CD8-positive, alpha-beta T cell (primary cell): ENCODE measurements at regions of chr1 and their contacts with region 1.

Region 1: DNA sequence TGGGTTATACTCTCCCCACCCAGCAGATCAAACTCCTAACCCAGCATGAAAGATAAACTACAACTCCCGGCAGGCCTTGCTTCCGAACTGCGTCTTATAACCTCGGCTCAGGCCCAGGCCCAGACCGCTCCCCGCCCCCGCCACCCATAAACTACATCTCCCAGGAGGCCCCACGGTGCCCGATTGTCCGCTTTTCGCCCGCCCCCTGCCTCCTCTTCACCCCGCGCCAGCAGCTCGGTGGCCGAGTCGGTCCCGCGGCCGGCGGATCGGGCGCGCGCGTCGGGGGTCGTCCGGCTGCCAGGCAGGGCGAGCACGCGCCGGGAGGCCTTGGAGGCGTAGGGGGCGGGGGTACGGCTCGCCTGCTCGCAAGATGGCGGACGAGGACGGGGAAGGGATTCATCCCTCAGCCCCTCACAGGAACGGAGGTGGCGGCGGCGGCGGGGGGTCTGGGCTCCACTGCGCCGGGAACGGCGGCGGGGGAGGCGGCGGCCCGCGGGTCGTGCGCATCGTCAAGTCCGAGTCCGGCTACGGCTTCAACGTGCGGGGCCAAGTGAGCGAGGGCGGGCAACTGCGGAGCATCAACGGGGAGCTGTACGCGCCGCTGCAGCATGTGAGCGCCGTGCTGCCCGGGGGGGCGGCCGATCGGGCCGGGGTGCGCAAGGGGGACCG is at the start of gene SNX27:
- DNase-seq: peak; percentile 74 to 95 (median 87)
- ATAC-seq: peak; percentile 89
- H3K4me3 ChIP-seq: peak within 1 kb of the TSS; percentile 64 to 93
- H3K4me3 Mint-ChIP-seq: peak within 1 kb of the TSS; percentile 99
- H3K27ac ChIP-seq: peak within 1 kb of the TSS; percentile 54 to 59
- H3K27ac Mint-ChIP-seq: peak within 1 kb of the TSS; percentile 95
- H3K4me1 ChIP-seq: peaks cover 16% of the 10 kb centered on the region
- H3K4me1 Mint-ChIP-seq: peaks cover 38% of the 10 kb centered on the region
- H3K27me3 ChIP-seq: no peaks in the 10 kb centered on the region
- H3K27me3 Mint-ChIP-seq: peaks cover 4% of the 10 kb centered on the region
- CTCF ChIP-seq: no peak
- total RNA-seq, gene SNX27: 9.8 to 12.2 TPM

Region 2: DNA sequence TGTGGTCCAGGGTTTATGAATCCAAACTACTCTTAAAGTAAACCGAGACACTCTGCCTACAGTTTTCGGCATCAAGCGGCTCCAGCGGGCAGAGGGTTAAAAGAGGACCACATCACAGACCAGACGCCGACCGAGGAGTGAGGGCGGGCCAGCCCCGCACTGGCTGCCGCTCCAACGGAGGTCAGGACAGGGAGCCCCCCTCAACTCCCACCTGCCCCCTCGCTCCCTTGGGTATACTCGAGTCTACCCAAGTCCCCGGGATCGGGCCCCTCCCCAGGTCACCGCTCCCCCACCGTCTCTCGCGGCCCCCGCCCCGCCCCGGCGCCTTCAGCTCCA is 735.9 kb before region 1 on chr1:
- CTCF ChIA-PET with region 1: no interaction called
- POLR2A ChIA-PET with region 1: no interaction called
- intact Hi-C with region 1: loop called in 1 of 2 experiments (anchors 5 kb)
- DNase-seq: peak in 1 of 9 experiments; percentile 42
- ATAC-seq: peak; percentile 42
- H3K4me3 ChIP-seq: peak overlapping the region; percentile 86 to 97
- H3K4me3 Mint-ChIP-seq: peak overlapping the region; percentile 89
- H3K27ac ChIP-seq: peak overlapping the region; percentile 61 to 76
- H3K27ac Mint-ChIP-seq: peak overlapping the region; percentile 93
- H3K4me1 ChIP-seq: peaks cover 20% of the 10 kb centered on the region
- H3K4me1 Mint-ChIP-seq: peaks cover 29% of the 10 kb centered on the region
- H3K27me3 ChIP-seq: no peaks in the 10 kb centered on the region
- H3K27me3 Mint-ChIP-seq: no peaks in the 10 kb centered on the region
- CTCF ChIP-seq: no peak

Region 3: DNA sequence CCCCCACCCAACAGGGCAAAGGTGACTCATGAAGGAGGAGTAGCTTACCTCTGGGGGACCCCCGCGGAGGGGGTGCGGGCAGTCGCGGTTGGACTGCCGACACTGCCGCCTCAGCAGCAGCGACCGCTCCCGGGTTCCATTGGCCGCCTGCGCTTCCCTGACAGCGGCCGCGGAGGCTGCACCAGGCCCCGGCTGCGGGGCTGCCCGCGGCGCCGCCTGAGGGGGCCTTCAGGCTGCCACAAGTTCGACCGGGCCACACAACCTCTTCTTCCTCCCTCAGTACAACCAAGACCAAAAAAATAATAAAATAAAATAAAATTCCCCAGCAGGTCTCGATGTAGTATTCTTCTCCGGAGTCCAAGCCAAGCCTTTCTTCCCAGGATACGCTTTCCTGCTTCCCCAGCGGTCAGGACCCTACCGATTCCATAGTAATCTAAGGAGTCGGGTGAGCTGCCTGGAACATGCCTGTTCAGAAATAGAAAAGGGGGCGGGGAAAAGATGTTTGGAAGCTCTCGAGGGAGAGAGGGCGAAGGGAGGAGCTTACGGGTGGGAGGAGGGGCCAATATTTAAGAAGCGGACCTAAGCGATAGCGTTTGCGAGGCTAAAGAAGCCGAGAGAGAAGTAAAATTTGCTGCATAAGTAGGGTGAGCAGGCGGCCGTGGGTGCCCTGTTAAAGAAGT is 284.6 kb before region 1 on chr1 and contains the start of gene PI4KB:
- CTCF ChIA-PET with region 1: no interaction called
- POLR2A ChIA-PET with region 1: no interaction called
- intact Hi-C with region 1: loop called in 1 of 2 experiments (anchors 5 kb)
- DNase-seq: peak; percentile 76 to 98 (median 87)
- ATAC-seq: peak; percentile 93
- H3K4me3 ChIP-seq: peak within 1 kb of the TSS; percentile 67 to 86
- H3K4me3 Mint-ChIP-seq: peak within 1 kb of the TSS; percentile 88
- H3K27ac ChIP-seq: peak within 1 kb of the TSS; percentile 75 to 98
- H3K27ac Mint-ChIP-seq: peak within 1 kb of the TSS; percentile 93
- H3K4me1 ChIP-seq: peaks cover 15% of the 10 kb centered on the region
- H3K4me1 Mint-ChIP-seq: peaks cover 47% of the 10 kb centered on the region
- H3K27me3 ChIP-seq: no peaks in the 10 kb centered on the region
- H3K27me3 Mint-ChIP-seq: no peaks in the 10 kb centered on the region
- CTCF ChIP-seq: no peak
- total RNA-seq, gene PI4KB: 63.1 to 63.2 TPM

Region 4: GRCh38 chr1:151459331-151460046 is 152.5 kb before region 1 on chr1 and contains the start of gene POGZ:
- CTCF ChIA-PET with region 1: no interaction called
- POLR2A ChIA-PET with region 1: no interaction called
- intact Hi-C with region 1: loop called (anchors 1 to 2 kb)
- DNase-seq: peak; percentile 89 to 97 (median 95)
- ATAC-seq: peak; percentile 69
- H3K4me3 ChIP-seq: peak within 1 kb of the TSS; percentile 75 to 79
- H3K4me3 Mint-ChIP-seq: peak within 1 kb of the TSS; percentile 89
- H3K27ac ChIP-seq: peak within 1 kb of the TSS; percentile 73 to 88
- H3K27ac Mint-ChIP-seq: peak within 1 kb of the TSS; percentile 93
- H3K4me1 ChIP-seq: peaks cover 18% of the 10 kb centered on the region
- H3K4me1 Mint-ChIP-seq: peaks cover 29% of the 10 kb centered on the region
- H3K27me3 ChIP-seq: peaks cover 0 to 1% of the 10 kb centered on the region in 2 experiments
- H3K27me3 Mint-ChIP-seq: peaks cover 24% of the 10 kb centered on the region
- CTCF ChIP-seq: no peak
- total RNA-seq, gene POGZ: 85.4 to 88.0 TPM

Region 5: GRCh38 chr1:151762941-151763921 is 151.3 kb after region 1 on chr1 and contains the start of gene MRPL9:
- CTCF ChIA-PET with region 1: no interaction called
- POLR2A ChIA-PET with region 1: interaction called, 3 read pairs
- intact Hi-C with region 1: loop called (anchors 1 to 2 kb)
- DNase-seq: peak; percentile 75 to 89 (median 83)
- ATAC-seq: peak; percentile 99
- H3K4me3 ChIP-seq: peak within 1 kb of the TSS; percentile 78 to 88
- H3K4me3 Mint-ChIP-seq: peak within 1 kb of the TSS; percentile 90
- H3K27ac ChIP-seq: peak within 1 kb of the TSS; percentile 72 to 92
- H3K27ac Mint-ChIP-seq: peak within 1 kb of the TSS; percentile 96
- H3K4me1 ChIP-seq: peaks cover 12% of the 10 kb centered on the region
- H3K4me1 Mint-ChIP-seq: peaks cover 20% of the 10 kb centered on the region
- H3K27me3 ChIP-seq: no peaks in the 10 kb centered on the region
- H3K27me3 Mint-ChIP-seq: no peaks in the 10 kb centered on the region
- CTCF ChIP-seq: no peak
- total RNA-seq, gene MRPL9: 176 to 186 TPM

Region 6: GRCh38 chr1:151839457-151840405 is 227.8 kb after region 1 on chr1 and contains the start of gene C2CD4D:
- CTCF ChIA-PET with region 1: no interaction called
- POLR2A ChIA-PET with region 1: no interaction called
- intact Hi-C with region 1: loop called in 1 of 2 experiments (anchors 5 kb)
- DNase-seq: peak; percentile 43 to 89 (median 67)
- ATAC-seq: peak; percentile 72
- H3K4me3 ChIP-seq: peak within 1 kb of the TSS; percentile 52
- H3K4me3 Mint-ChIP-seq: peak within 1 kb of the TSS; percentile 85
- H3K27ac ChIP-seq: peak within 1 kb of the TSS in 1 of 2 experiments; percentile 66
- H3K27ac Mint-ChIP-seq: peak within 1 kb of the TSS; percentile 88
- H3K4me1 ChIP-seq: peaks cover 37% of the 10 kb centered on the region
- H3K4me1 Mint-ChIP-seq: peaks cover 47% of the 10 kb centered on the region
- H3K27me3 ChIP-seq: peaks cover 0 to 3% of the 10 kb centered on the region in 2 experiments
- H3K27me3 Mint-ChIP-seq: no peaks in the 10 kb centered on the region
- CTCF ChIP-seq: no peak
- total RNA-seq, gene C2CD4D: 0.44 to 0.65 TPM